CD14-positive monocyte (primary cell): ENCODE measurements at regions of chr6 and their contacts with region 1.

Region 1: DNA sequence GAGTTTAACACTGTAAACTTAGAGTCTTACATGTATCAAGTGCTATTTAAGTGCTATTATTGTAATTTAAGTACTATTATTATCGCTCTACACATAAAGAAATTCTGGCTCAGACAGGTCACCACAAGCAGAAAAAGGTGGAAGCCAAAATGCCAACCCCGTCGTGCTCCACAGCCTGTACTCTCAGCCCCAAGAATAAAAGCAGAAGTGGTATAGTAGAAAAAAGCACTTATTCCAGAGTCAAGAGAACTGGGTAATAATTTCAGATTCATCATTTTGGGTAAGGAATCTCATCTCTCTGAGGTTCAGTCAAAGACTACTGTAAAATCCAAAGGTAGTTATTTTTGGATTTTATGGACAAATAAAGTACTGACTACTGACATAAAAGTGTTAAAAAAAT is 943 bp downstream of the ZUP1 start:
- DNase-seq: peak; percentile 37 to 54 (median 53)
- H3K4me3 ChIP-seq: peak overlapping the region; percentile 88 to 94 (median 93)
- H3K4me3 Mint-ChIP-seq: peak overlapping the region; percentile 96 to 98
- H3K27ac ChIP-seq: peak overlapping the region in 1 of 2 donors; percentile 92
- H3K27ac Mint-ChIP-seq: peak overlapping the region; percentile 94 to 98 (median 96)
- H3K4me1 ChIP-seq: peaks cover 11 to 41% of the 10 kb centered on the region in 2 donors
- H3K4me1 Mint-ChIP-seq: peaks cover 36% of the 10 kb centered on the region
- H3K27me3 ChIP-seq: no peaks in the 10 kb centered on the region
- H3K27me3 Mint-ChIP-seq: peaks cover 0 to 2% (median 0%) of the 10 kb centered on the region in 3 donors
- CTCF ChIP-seq: no peak

Region 2: GRCh38 chr6:116570856-116571682 is 96.6 kb before region 1 on chr6 and contains the start of gene RWDD1:
- intact Hi-C with region 1: loop called in 1 of 2 experiments (anchors 5 kb)
- DNase-seq: peak; percentile 97 to 98 (median 98)
- H3K4me3 ChIP-seq: peak within 1 kb of the TSS; percentile 87 to 92 (median 89)
- H3K4me3 Mint-ChIP-seq: peak within 1 kb of the TSS; percentile 99
- H3K27ac ChIP-seq: peak within 1 kb of the TSS; percentile 91 to 96
- H3K27ac Mint-ChIP-seq: peak within 1 kb of the TSS; percentile 94 to 99 (median 98)
- H3K4me1 ChIP-seq: peaks cover 38 to 46% of the 10 kb centered on the region in 2 donors
- H3K4me1 Mint-ChIP-seq: peaks cover 56% of the 10 kb centered on the region
- H3K27me3 ChIP-seq: no peaks in the 10 kb centered on the region
- H3K27me3 Mint-ChIP-seq: peaks cover 0 to 2% (median 0%) of the 10 kb centered on the region in 3 donors
- CTCF ChIP-seq: no peak
- polyA plus RNA-seq, gene RWDD1: 11.8 to 45.5 (median 34.7) TPM

Region 3: GRCh38 chr6:116633685-116634084 is 33.9 kb before region 1 on chr6:
- intact Hi-C with region 1: no loop called
- DNase-seq: no peak
- H3K4me3 ChIP-seq: no peak overlapping the region
- H3K4me3 Mint-ChIP-seq: no peak overlapping the region
- H3K27ac ChIP-seq: no peak overlapping the region
- H3K27ac Mint-ChIP-seq: peak overlapping the region in 1 of 7 donors; percentile 27
- H3K4me1 ChIP-seq: peaks cover 11 to 15% of the 10 kb centered on the region in 2 donors
- H3K4me1 Mint-ChIP-seq: peaks cover 12% of the 10 kb centered on the region
- H3K27me3 ChIP-seq: no peaks in the 10 kb centered on the region
- H3K27me3 Mint-ChIP-seq: peaks cover 0 to 1% (median 0%) of the 10 kb centered on the region in 3 donors
- CTCF ChIP-seq: no peak

Region 4: DNA sequence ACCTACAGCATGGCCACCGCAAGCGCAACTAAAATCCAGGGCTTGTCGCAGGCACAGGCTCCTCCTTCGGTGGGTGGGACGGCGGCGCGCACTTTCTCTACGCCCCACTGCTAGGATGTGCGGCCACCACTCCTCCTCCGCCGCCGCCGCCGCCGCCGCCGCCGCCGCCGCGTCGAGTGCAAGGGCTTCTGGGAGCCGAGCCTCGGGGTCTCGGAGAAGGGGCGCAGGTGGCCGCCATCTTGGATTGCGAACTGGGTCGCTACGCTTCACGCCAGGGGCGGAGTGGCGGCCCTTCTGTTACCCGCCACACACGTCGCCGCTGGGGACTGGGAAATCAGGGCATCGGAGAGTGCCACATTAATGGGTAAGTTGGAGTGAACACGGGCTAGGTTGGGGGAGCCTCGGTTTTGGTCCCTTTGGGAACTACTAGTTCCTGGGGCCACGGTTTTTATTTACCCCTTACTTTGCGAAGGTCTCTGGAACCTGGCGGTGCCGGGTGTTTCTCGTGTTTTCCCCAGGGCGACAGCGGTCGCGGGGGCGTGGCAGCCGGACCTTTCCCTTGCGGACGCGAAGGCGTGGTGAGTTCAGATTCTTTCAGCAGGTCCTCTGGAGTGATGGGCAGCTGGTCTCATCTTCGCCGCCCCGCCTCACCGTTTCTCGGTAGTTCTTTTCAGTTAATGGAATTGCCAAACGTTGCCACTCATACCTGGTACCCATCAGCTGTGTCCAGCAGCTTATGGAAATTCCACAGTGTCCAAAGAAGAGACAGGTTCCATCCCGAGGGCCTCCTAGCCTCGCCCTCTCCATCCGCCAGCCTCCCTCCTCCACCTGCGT is 13.6 kb after region 1 on chr6 and contains the start of gene KPNA5:
- intact Hi-C with region 1: loop called in 1 of 2 experiments (anchors 1 kb)
- DNase-seq: peak; percentile 63 to 66 (median 65)
- H3K4me3 ChIP-seq: peak within 1 kb of the TSS; percentile 62 to 90 (median 65)
- H3K4me3 Mint-ChIP-seq: peak within 1 kb of the TSS; percentile 96 to 99
- H3K27ac ChIP-seq: peak within 1 kb of the TSS; percentile 74 to 76
- H3K27ac Mint-ChIP-seq: peak within 1 kb of the TSS; percentile 89 to 96 (median 95)
- H3K4me1 ChIP-seq: peaks cover 21 to 24% of the 10 kb centered on the region in 2 donors
- H3K4me1 Mint-ChIP-seq: peaks cover 26% of the 10 kb centered on the region
- H3K27me3 ChIP-seq: no peaks in the 10 kb centered on the region
- H3K27me3 Mint-ChIP-seq: peaks cover 0 to 4% (median 2%) of the 10 kb centered on the region in 3 donors
- CTCF ChIP-seq: no peak
- polyA plus RNA-seq, gene KPNA5: 1.7 to 2.9 (median 2.3) TPM

Region 5: GRCh38 chr6:116726947-116727346 is 59.3 kb after region 1 on chr6:
- intact Hi-C with region 1: no loop called
- DNase-seq: no peak
- H3K4me3 ChIP-seq: no peak overlapping the region
- H3K4me3 Mint-ChIP-seq: no peak overlapping the region
- H3K27ac ChIP-seq: no peak overlapping the region
- H3K27ac Mint-ChIP-seq: no peak overlapping the region
- H3K4me1 ChIP-seq: no peaks in the 10 kb centered on the region
- H3K4me1 Mint-ChIP-seq: no peaks in the 10 kb centered on the region
- H3K27me3 ChIP-seq: no peaks in the 10 kb centered on the region
- H3K27me3 Mint-ChIP-seq: no peaks in the 10 kb centered on the region
- CTCF ChIP-seq: no peak

Region 6: GRCh38 chr6:116996842-116997241 is 329.2 kb after region 1 on chr6:
- intact Hi-C with region 1: no loop called
- DNase-seq: no peak
- H3K4me3 ChIP-seq: no peak overlapping the region
- H3K4me3 Mint-ChIP-seq: no peak overlapping the region
- H3K27ac ChIP-seq: no peak overlapping the region
- H3K27ac Mint-ChIP-seq: no peak overlapping the region
- H3K4me1 ChIP-seq: no peaks in the 10 kb centered on the region
- H3K4me1 Mint-ChIP-seq: no peaks in the 10 kb centered on the region
- H3K27me3 ChIP-seq: no peaks in the 10 kb centered on the region
- H3K27me3 Mint-ChIP-seq: peaks cover 0 to 3% (median 2%) of the 10 kb centered on the region in 3 donors
- CTCF ChIP-seq: no peak